Activated CD8-positive, alpha-beta memory T cell treated with anti-CD3 and anti-CD28 coated beads, Interleukin-2, amount 10 ng/mL, durations not matched to agents 7 days and 5 days (primary cell): ENCODE measurements at regions of chr3 and their contacts with region 1.

Region 1: DNA sequence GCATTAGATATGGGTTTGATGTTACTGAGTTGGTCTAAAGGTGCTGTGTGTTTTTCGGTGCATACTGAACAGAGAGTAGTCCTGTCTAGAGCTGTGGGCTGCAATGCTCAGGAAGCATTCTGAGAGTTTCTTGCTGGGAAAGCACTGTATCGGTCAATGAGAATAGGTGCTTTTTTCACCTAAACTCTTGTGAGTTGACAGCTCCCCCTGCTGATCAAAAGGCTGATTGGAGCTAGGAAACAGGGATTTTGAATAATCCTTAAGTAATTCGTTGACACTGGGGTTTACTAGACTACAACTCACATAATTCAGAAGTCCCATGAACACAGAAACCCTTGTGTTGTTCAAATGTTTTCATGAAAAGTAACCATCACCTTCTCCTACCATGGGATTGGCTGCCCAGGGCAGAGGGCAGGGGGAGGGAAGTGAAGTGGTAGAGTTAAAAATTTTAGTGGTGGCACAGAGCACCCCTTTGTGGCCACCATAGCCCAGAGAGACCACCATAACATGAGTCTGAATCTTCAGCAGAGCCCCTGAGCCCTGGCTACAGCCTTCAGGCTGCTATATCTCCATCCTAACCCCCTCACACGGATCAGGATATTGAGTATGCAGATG is 13.0 kb upstream of the MANF start:
- DNase-seq: peak; percentile 68
- ATAC-seq: peak; percentile 66
- H3K4me3 Mint-ChIP-seq: no peak overlapping the region
- H3K27ac Mint-ChIP-seq: no peak overlapping the region
- H3K4me1 Mint-ChIP-seq: no peaks in the 10 kb centered on the region
- H3K27me3 Mint-ChIP-seq: no peaks in the 10 kb centered on the region

Region 2: GRCh38 chr3:50971487-50971924 is 400.5 kb before region 1 on chr3:
- CTCF ChIA-PET with region 1: interaction called, 27 read pairs
- DNase-seq: peak; percentile 74
- ATAC-seq: peak; percentile 91
- H3K4me3 Mint-ChIP-seq: no peak overlapping the region
- H3K27ac Mint-ChIP-seq: no peak overlapping the region
- H3K4me1 Mint-ChIP-seq: peaks cover 23% of the 10 kb centered on the region
- H3K27me3 Mint-ChIP-seq: no peaks in the 10 kb centered on the region